CD4-positive, alpha-beta memory T cell (primary cell): ENCODE measurements at regions of chr3 and their contacts with region 1.

Region 1: DNA sequence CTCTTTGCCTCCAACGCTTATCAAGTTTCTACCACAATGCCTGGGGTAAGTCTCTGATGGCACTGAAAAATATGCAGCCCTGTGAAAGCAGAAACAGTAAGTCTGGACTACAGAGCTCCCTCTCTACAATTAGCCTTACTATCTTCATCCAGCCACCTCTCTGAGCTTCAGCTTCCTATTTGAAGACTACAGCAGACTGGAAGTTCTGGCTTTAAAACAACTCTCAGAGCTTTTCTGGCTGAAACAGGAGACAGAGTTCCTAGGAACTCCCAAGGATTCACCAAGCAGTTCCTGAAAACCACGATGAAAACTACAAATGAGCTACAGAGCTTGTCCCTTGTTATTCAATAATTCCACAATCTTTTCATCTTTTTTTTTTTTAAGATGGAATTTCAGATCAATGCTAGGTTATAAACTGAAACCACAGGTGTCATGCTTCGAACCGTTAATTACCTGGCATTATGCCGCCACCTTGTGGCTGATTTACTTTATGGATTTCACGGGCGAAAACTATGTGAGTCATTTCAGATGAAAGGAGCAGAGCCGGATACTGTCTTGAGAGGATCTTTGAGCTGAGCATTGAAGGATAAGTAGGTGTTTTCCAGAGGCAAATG is 3.9 kb downstream of the CRYGS start:
- DNase-seq: peak; percentile 78 to 85 (median 82)
- H3K4me3 ChIP-seq: no peak overlapping the region
- H3K4me3 Mint-ChIP-seq: peak overlapping the region in 3 of 8 donors; percentile 2 to 48 (median 36)
- H3K27ac ChIP-seq: no peak overlapping the region
- H3K27ac Mint-ChIP-seq: peak overlapping the region in 6 of 7 donors; percentile 11 to 53 (median 47)
- H3K4me1 ChIP-seq: peaks cover 9% of the 10 kb centered on the region
- H3K4me1 Mint-ChIP-seq: peaks cover 6 to 15% (median 10%) of the 10 kb centered on the region in 4 donors
- H3K27me3 ChIP-seq: no peaks in the 10 kb centered on the region
- H3K27me3 Mint-ChIP-seq: no peaks in the 10 kb centered on the region

Region 2: DNA sequence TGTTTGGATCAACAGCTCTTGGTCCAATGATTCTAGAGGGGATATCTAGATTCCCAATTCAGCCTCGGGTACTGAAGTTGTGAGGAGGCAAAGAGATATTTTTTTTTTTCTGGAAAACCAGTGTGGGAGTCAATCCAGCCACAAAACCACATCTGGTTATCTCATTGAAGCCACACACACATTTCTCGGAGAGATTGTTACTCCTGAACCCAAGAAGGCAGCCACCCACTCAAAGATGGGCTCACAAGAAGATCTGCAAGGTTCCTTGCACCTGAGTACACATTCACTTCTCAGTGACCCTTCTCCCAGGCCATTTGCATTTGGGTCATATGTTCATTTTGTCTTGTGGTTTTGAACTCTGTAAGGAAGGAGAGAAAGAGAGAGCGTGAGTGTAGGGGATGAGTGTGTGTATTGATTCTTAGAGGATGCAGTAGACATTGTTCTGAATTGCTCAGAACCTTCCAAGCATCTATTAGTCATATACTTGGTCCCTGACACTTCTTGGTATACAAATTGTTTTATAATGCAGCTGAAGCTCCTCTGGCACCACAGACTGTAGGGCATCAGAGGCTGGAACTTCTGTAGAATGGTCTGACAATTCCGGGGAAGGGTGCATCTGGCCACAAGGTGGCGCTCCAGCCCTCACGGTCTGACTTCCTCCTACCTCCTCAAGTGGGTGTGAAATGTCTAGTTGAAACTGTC is 563.2 kb before region 1 on chr3:
- CTCF ChIA-PET with region 1: interaction called, 185 read pairs
- POLR2A ChIA-PET with region 1: no interaction called
- intact Hi-C with region 1: no loop called
- DNase-seq: peak; percentile 61 to 70 (median 65)
- H3K4me3 ChIP-seq: no peak overlapping the region
- H3K4me3 Mint-ChIP-seq: no peak overlapping the region
- H3K27ac ChIP-seq: no peak overlapping the region
- H3K27ac Mint-ChIP-seq: no peak overlapping the region
- H3K4me1 ChIP-seq: no peaks in the 10 kb centered on the region
- H3K4me1 Mint-ChIP-seq: peaks cover 2 to 5% (median 5%) of the 10 kb centered on the region in 4 donors
- H3K27me3 ChIP-seq: no peaks in the 10 kb centered on the region
- H3K27me3 Mint-ChIP-seq: peaks cover 0 to 2% of the 10 kb centered on the region in 2 donors

Region 3: GRCh38 chr3:186259612-186260383 is 280.5 kb before region 1 on chr3:
- CTCF ChIA-PET with region 1: interaction called, 333 read pairs
- POLR2A ChIA-PET with region 1: interaction called, 12 read pairs
- intact Hi-C with region 1: loop called (anchors 1 kb)
- DNase-seq: peak; percentile 49 to 61 (median 59)
- H3K4me3 ChIP-seq: no peak overlapping the region
- H3K4me3 Mint-ChIP-seq: peak overlapping the region in 4 of 8 donors; percentile 30 to 56 (median 43)
- H3K27ac ChIP-seq: no peak overlapping the region
- H3K27ac Mint-ChIP-seq: peak overlapping the region in 6 of 7 donors; percentile 5 to 89 (median 80)
- H3K4me1 ChIP-seq: peaks cover 14% of the 10 kb centered on the region
- H3K4me1 Mint-ChIP-seq: peaks cover 8 to 16% (median 12%) of the 10 kb centered on the region in 4 donors
- H3K27me3 ChIP-seq: no peaks in the 10 kb centered on the region
- H3K27me3 Mint-ChIP-seq: peaks cover 2% of the 10 kb centered on the region in 2 donors

Region 4: DNA sequence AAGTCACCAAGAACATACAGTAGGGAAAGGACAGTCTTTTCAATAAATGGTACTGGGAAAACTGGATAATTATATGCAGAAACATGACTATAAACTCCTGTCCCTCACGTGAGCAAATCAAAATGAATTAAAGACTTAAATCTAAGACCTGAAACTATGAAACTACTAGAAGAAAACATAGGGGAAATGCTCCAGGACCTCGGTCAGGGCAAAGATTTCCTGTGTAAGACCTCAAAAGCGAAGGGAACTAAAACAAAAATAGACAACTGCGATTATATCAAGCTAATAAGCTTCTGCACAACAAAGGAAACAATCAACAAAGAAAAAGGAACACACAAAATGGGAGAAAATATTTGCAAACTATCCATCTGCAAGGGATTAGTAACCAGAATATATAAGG is 58.8 kb before region 1 on chr3:
- CTCF ChIA-PET with region 1: interaction called, 13 read pairs
- POLR2A ChIA-PET with region 1: no interaction called
- intact Hi-C with region 1: no loop called
- DNase-seq: no peak
- H3K4me3 ChIP-seq: no peak overlapping the region
- H3K4me3 Mint-ChIP-seq: no peak overlapping the region
- H3K27ac ChIP-seq: no peak overlapping the region
- H3K27ac Mint-ChIP-seq: no peak overlapping the region
- H3K4me1 ChIP-seq: no peaks in the 10 kb centered on the region
- H3K4me1 Mint-ChIP-seq: peaks cover 6 to 9% (median 7%) of the 10 kb centered on the region in 4 donors
- H3K27me3 ChIP-seq: no peaks in the 10 kb centered on the region
- H3K27me3 Mint-ChIP-seq: peaks cover 0 to 6% of the 10 kb centered on the region in 2 donors

Region 5: DNA sequence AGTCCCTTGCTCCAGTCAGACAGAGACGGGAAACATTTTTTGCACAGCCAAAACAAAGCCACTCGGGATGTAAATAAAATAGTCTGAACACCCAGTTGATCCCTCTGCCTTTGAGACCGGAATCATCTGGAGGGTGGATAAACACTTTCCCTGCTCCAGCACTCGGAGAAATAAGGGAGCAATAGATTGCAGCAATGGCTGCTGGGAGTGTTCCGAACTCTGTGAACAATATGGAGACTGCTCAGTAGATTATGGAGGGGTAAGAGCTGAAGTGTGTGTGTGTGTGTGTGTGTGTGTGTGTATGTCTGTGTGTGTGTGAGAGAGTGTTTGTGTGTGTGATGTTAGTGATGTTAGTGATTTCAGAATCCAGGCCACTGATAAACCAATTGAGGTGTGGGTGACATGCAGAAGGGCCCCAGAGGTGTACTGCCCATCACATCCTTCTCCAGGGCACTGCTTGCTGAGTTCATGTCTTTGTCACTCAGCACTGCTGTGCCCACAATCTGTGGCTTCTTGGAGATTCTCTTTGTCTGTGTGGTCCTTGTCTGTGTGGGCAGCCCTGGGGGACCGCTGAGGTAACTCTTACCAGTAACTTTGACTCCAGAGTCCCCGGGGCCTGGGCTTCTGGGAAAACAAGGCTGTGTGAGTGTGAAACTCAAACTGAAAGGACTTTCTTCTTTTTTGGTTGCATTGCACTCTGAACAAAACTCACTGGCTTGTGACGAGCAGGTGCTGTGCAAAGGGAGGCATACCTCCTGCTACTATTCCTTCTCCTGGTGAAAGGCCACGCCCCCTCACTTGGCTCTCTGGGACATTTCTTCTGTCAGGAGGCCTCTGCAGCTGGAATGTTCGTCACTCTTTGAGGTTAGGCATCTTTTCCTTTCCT is 19.1 kb before region 1 on chr3:
- CTCF ChIA-PET with region 1: interaction called, 61 read pairs
- POLR2A ChIA-PET with region 1: interaction called, 26 read pairs
- intact Hi-C with region 1: loop called (anchors 2 kb)
- DNase-seq: no peak
- H3K4me3 ChIP-seq: no peak overlapping the region
- H3K4me3 Mint-ChIP-seq: peak overlapping the region in 2 of 8 donors; percentile 29 to 53
- H3K27ac ChIP-seq: no peak overlapping the region
- H3K27ac Mint-ChIP-seq: peak overlapping the region; percentile 16 to 96 (median 57)
- H3K4me1 ChIP-seq: peaks cover 57% of the 10 kb centered on the region
- H3K4me1 Mint-ChIP-seq: peaks cover 35 to 63% (median 49%) of the 10 kb centered on the region in 4 donors
- H3K27me3 ChIP-seq: no peaks in the 10 kb centered on the region
- H3K27me3 Mint-ChIP-seq: no peaks in the 10 kb centered on the region

Region 6: DNA sequence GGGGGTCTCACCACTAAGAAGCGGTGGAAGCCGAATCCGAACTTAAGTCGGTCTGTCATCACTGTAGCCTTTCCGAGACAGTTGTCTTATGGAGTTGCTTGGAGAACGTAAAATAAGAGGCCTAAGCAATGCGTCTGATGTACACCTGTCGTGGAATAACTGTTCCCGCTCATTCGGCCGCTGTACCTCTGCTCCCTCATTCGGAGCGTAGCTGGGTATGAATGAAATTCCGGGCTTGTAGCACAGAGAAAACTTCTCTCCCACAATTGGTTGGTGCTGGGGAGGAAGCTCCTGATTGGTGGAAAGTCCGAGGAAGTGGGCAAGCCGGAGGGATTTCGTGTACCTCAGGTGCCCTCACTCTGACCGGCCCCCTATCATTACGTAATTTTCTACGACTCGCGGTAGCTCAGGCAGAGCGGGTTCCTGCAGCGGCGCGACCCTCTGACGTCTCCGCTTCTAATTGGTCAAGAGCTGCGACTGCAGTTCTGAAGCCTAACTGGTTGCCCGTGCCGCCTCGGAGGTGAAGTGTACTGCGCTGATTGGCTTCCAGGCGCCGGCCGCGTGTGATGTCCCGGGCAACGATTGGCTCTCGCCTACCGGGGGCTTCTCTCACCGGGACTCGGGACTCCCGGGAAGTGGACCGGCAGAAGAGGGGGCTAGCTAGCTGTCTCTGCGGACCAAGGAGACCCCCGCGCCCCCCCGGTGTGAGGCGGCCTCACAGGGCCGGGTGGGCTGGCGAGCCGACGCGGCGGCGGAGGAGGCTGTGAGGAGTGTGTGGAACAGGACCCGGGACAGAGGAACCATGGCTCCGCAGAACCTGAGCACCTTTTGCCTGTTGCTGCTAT is 30.0 kb after region 1 on chr3 and contains the start of gene DNAJB11:
- CTCF ChIA-PET with region 1: interaction called, 9 read pairs
- POLR2A ChIA-PET with region 1: interaction called, 5 read pairs
- intact Hi-C with region 1: loop called (anchors 1 kb)
- DNase-seq: peak; percentile 96 to 100 (median 99)
- H3K4me3 ChIP-seq: peak within 1 kb of the TSS; percentile 71 to 93
- H3K4me3 Mint-ChIP-seq: peak within 1 kb of the TSS; percentile 89 to 100 (median 94)
- H3K27ac ChIP-seq: peak within 1 kb of the TSS; percentile 91
- H3K27ac Mint-ChIP-seq: peak within 1 kb of the TSS; percentile 95 to 99 (median 98)
- H3K4me1 ChIP-seq: peaks cover 37% of the 10 kb centered on the region
- H3K4me1 Mint-ChIP-seq: peaks cover 30 to 71% (median 45%) of the 10 kb centered on the region in 4 donors
- H3K27me3 ChIP-seq: no peaks in the 10 kb centered on the region
- H3K27me3 Mint-ChIP-seq: no peaks in the 10 kb centered on the region
- total RNA-seq, gene DNAJB11: 34.0 to 38.6 TPM

Region 7: GRCh38 chr3:186598108-186598784 is 57.9 kb after region 1 on chr3:
- CTCF ChIA-PET with region 1: no interaction called
- POLR2A ChIA-PET with region 1: no interaction called
- intact Hi-C with region 1: no loop called
- DNase-seq: no peak
- H3K4me3 ChIP-seq: no peak overlapping the region
- H3K4me3 Mint-ChIP-seq: no peak overlapping the region
- H3K27ac ChIP-seq: no peak overlapping the region
- H3K27ac Mint-ChIP-seq: no peak overlapping the region
- H3K4me1 ChIP-seq: no peaks in the 10 kb centered on the region
- H3K4me1 Mint-ChIP-seq: peaks cover 0 to 2% (median 0%) of the 10 kb centered on the region in 4 donors
- H3K27me3 ChIP-seq: no peaks in the 10 kb centered on the region
- H3K27me3 Mint-ChIP-seq: peaks cover 0 to 2% of the 10 kb centered on the region in 2 donors